Endothelial cell of umbilical vein (primary cell): ENCODE measurements at regions of chr16 and their contacts with region 1.

Region 1: DNA sequence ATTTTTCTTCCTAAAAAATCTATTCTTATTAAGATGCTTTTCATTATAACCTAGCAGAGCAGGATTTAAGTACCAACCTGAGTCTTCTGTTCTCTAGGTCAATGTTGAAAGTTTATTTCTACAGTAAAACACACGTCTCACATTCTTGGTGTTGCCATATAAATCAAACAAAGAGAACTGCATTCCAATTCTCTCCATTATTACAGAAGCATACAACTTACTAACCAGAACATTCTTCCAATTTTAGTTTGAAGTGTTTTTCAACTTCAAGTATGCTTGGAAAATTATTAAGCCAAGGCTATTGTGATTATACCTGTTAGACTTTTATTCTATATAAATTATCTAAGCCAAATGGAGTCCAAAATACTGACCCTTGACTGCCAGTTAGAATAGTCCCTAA is 110.4 kb upstream of the PMFBP1 start:
- DNase-seq: no peak
- H3K4me3 ChIP-seq: no peak overlapping the region
- H3K27ac ChIP-seq: no peak overlapping the region
- H3K4me1 ChIP-seq: no peaks in the 10 kb centered on the region
- H3K27me3 ChIP-seq: no peaks in the 10 kb centered on the region
- CTCF ChIP-seq: no peak
- POLR2A ChIP-seq: no peak

Region 2: GRCh38 chr16:72270531-72270930 is 11.8 kb before region 1 on chr16:
- CTCF ChIA-PET with region 1: interaction called, 13 read pairs
- POLR2A ChIA-PET with region 1: no interaction called
- dilution Hi-C with region 1: no loop called
- intact Hi-C with region 1: no loop called
- DNase-seq: no peak
- H3K4me3 ChIP-seq: no peak overlapping the region
- H3K27ac ChIP-seq: no peak overlapping the region
- H3K4me1 ChIP-seq: no peaks in the 10 kb centered on the region
- H3K27me3 ChIP-seq: no peaks in the 10 kb centered on the region
- CTCF ChIP-seq: no peak
- POLR2A ChIP-seq: no peak